ENCODE measurements at regions of chr12 and their contacts with region 1.

Region 1: GRCh38 chr12:108664338-108665258 is 30.9 kb upstream of the SELPLG start:
- DNase-seq: peak; percentile 87
- ATAC-seq: peak; percentile 99
- H3K4me3 ChIP-seq: no peak overlapping the region
- H3K27ac ChIP-seq: peak overlapping the region; percentile 15; the same call in 1 of the 2 replicates
- H3K4me1 ChIP-seq: peaks cover 8 to 20% of the 10 kb centered on the region in 2 experiments
- H3K27me3 ChIP-seq: no peaks in the 10 kb centered on the region
- CTCF ChIP-seq: peak; percentile 87 to 94 (median 90)
- POLR2A ChIP-seq: no peak
- RAD21 ChIP-seq: peak; percentile 99

Region 2: DNA sequence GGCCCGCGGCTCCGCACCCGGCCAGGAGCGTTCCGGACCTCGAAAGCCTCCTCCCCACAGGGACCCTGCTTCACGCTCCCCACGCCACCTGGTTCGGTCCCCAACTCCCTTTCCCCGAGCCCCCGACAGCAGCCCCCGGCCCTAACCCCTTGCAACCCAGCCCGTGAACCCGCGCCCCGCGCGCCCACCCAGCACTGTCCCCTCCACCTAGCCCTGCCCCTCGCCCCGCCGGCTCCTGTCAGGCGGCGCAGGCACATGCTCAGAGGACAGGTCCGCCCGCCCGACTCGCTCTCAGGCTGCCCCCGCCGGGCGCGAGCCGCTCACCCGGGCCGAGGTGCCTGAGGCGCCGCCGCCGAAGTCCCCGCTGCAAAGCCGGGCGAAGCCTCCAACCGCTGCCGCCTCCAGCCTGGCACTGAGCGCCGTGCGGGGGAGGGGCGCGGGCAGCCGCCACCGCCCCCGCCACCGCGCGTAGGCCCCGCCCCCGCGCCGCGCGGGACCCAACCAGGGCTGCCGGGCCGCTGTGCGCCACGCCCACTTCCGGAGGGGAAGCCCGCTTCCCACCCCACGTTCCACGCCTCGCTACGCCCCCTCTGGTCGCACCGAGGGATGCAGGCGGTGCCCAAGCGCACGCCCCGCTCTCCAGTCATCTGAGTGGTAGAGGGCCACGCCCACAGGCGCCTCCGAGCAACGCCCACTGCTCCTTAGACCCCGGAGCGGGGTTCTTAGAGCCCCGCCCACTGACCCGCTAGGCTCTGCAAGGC is 66.7 kb after region 1 on chr12 and contains the start of gene CORO1C:
- CTCF ChIA-PET with region 1: no interaction called
- POLR2A ChIA-PET with region 1: no interaction called
- RAD21 ChIA-PET with region 1: interaction called in 1 of 2 experiments, 7 read pairs
- intact Hi-C with region 1: loop called (anchors 5 kb)
- DNase-seq: peak; percentile 92
- ATAC-seq: peak; percentile 79
- H3K4me3 ChIP-seq: peak within 1 kb of the TSS; percentile 71 to 85
- H3K27ac ChIP-seq: peak within 1 kb of the TSS; percentile 78
- H3K4me1 ChIP-seq: peaks cover 32 to 59% of the 10 kb centered on the region in 2 experiments
- H3K27me3 ChIP-seq: no peaks in the 10 kb centered on the region
- CTCF ChIP-seq: peak in 2 of 3 experiments; percentile 69 to 80; a peak in 4 of 6 replicates
- POLR2A ChIP-seq: peak; percentile 59
- RAD21 ChIP-seq: peak; percentile 44; the same call in 1 of the 2 replicates
- total RNA-seq, gene CORO1C: 138 TPM

Region 3: DNA sequence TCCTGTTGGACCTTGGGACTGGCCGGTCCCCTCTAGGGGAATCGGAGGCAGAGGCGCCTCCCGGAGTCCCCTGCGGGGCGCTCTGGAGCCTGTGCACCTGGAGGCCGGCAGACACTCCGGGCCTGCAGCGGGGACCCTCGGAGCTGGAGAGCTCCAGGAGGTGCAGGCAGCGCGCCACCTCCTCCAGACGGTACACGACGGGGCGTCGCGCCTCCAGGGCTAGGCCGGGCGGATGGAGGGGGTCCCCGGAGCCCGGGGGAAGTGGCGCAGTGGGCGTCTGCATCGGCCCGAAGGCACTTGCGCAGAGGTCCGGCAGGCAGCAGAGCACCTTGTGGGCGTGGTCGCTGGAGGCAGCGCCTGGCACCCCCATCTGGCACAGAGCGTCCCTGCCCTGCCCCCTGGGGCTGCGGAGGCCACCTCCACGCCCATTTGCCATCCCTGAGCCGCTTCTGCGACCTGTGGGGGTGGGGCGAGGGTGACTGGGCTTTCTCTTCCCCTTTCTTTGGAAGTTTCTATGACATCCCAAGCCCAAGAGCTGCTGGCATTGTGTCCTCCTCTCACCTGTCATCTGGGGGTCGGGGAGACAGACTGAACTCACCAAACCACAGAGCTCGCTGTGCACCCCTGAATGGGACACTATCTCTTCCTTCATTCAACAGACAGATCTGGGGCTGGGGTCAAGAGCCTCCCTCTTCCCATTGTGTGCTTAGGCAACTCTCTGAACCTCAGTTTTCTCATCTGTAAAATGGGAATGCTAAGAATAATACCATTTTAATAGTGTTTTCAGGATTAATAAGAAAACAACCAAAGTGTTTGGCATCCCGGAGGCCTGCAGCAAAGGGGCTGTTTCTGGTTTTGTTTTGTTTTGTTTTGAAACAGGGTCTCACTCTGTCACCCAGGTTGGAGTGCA is 104.2 kb after region 1 on chr12:
- CTCF ChIA-PET with region 1: interaction called, 3 read pairs
- POLR2A ChIA-PET with region 1: no interaction called
- RAD21 ChIA-PET with region 1: no interaction called
- intact Hi-C with region 1: loop called (anchors 1 kb)
- DNase-seq: peak; percentile 63
- ATAC-seq: peak; percentile 96
- H3K4me3 ChIP-seq: peak overlapping the region; percentile 52 to 61
- H3K27ac ChIP-seq: peak overlapping the region; percentile 30; the same call in 1 of the 2 replicates
- H3K4me1 ChIP-seq: peaks cover 5 to 17% of the 10 kb centered on the region in 2 experiments
- H3K27me3 ChIP-seq: no peaks in the 10 kb centered on the region
- CTCF ChIP-seq: peak in 1 of 3 experiments; percentile 4; a peak in 2 of 6 replicates
- POLR2A ChIP-seq: peak; percentile 49
- RAD21 ChIP-seq: peak; percentile 17; the same call in 1 of the 2 replicates

Region 4: DNA sequence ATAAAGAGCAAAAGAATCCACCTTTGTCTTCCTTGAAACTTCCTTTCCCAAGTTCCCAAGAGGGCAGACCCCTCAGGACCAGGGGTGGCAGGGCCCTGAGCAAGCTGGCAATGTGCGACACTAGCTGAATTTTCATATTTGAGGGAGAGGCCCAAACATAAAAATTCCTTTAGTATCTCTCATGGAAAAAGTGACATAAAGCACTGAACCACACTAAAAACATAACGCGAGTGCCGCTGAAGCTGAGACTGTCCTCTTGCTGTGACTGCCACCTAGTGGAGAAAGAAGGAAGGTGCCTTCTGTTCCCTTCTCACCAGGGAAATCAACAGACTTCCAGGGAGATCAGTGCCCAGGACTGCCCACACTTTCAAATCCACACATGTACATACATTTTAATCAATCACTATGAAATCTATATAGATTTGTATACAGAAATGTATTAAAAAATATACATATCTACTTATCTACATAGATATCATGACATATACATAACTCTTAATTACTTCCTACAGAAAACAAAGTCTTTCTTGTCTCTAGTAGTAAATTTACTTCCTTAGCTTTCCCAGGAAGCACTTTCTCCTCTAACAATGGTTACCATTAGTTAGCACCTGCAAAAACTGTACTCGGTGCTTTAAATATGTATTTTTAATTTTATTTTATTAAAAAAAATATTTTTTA is 139.0 kb after region 1 on chr12:
- CTCF ChIA-PET with region 1: interaction called, 54 read pairs
- POLR2A ChIA-PET with region 1: no interaction called
- RAD21 ChIA-PET with region 1: interaction called, 5 to 6 read pairs
- intact Hi-C with region 1: loop called (anchors 1 kb)
- DNase-seq: peak; percentile 69
- ATAC-seq: peak; percentile 88
- H3K4me3 ChIP-seq: no peak overlapping the region
- H3K27ac ChIP-seq: peak overlapping the region; percentile 12; the same call in 1 of the 2 replicates
- H3K4me1 ChIP-seq: peaks cover 6 to 11% of the 10 kb centered on the region in 2 experiments; a peak in 3 of 4 replicates
- H3K27me3 ChIP-seq: no peaks in the 10 kb centered on the region
- CTCF ChIP-seq: peak; percentile 88 to 91 (median 88)
- POLR2A ChIP-seq: no peak
- RAD21 ChIP-seq: peak; percentile 95

Region 5: DNA sequence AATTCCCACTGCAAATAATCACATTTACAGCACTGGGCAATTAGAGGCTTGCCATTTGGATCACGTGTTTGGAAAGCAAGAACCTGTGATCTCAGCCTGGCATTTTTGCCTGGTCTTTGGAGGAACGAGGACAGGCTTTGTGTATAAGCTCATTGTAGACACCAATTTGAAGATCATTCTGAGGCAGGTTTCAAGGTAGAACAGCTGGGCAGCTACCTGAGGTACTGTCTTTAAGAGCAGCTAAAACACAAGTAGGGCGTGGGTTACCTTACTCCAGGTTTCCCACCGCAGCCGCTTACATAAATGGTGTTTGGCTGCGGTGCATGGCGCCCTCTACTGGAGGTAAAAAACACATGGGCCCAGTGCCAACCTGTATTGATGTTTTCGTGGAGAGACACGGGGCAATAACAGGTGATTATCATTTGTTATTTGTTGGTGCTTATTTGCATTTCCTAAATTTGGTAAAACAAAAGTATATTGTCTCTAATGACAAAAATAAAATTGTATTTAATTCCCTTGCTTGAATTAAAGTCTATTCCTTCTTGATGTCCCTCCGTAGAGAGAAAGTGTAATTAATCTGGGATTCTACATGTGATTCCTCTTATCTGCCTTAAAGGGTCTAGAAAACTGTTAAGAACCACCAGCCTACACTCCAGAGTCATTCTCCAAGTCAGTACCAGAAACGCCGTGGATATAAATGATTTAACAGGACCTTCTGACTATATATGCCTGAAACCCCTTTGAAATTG is 286.6 kb after region 1 on chr12:
- CTCF ChIA-PET with region 1: interaction called, 13 read pairs
- POLR2A ChIA-PET with region 1: no interaction called
- RAD21 ChIA-PET with region 1: no interaction called
- intact Hi-C with region 1: loop called (anchors 1 kb)
- DNase-seq: peak; percentile 70
- ATAC-seq: peak; percentile 85
- H3K4me3 ChIP-seq: peak overlapping the region; percentile 2 to 27; a peak in 2 of 4 replicates
- H3K27ac ChIP-seq: no peak overlapping the region
- H3K4me1 ChIP-seq: peaks cover 0 to 9% of the 10 kb centered on the region in 2 experiments; a peak in 2 of 4 replicates
- H3K27me3 ChIP-seq: no peaks in the 10 kb centered on the region
- CTCF ChIP-seq: peak; percentile 77 to 95 (median 86)
- POLR2A ChIP-seq: no peak
- RAD21 ChIP-seq: peak; percentile 96